SK-N-SH (cell line): ENCODE measurements at regions of chr10 and their contacts with region 1.

Region 1: DNA sequence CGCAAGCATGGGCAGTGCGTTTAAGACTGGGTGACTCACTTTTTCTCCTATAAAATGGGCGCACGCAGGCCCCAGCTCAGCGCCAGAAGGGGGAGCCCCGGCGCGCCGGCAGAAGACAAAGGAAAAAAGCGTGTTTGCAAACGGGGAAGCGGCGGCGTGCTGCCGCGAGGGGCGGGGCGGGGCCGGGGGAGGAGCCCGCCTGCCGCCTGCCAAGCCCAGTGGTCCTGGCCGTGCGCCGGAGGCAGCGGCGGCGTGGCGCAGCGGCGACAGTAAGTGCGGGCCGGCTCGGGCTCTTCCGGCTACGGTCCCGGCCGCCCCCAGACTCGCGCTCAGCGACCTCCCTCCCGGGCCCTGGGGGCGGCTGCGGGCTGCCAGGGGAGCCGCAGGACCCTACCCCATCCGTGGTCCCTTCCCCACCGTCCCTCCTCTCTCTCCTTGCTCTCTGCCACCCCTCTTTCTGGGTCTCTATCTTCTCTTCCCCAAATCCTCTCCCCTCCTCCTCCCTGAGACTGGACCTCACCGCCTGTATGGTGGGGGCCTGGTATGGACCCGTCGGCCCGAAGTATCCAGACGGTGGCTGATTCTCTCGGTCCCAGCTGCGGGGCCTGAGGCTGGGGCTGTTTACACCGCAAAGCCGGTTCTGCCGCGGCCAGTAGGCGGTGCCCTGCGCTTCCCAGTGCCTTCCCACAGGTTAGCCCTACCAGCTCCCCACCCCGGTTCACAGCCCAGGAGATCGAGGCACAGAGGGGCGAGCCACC is at the start of gene SLC29A3:
- DNase-seq: peak; percentile 93
- H3K4me3 ChIP-seq: peak within 1 kb of the TSS; percentile 86 to 94
- H3K27ac ChIP-seq: peak within 1 kb of the TSS; percentile 34 to 87; a peak in 3 of 4 replicates
- H3K4me1 ChIP-seq: peaks cover 0 to 18% of the 10 kb centered on the region in 2 experiments; a peak in 1 of 4 replicates
- H3K27me3 ChIP-seq: no peaks in the 10 kb centered on the region
- CTCF ChIP-seq: peak; percentile 67
- EP300 ChIP-seq: no peak
- RAD21 ChIP-seq: peak; percentile 66
- polyA plus RNA-seq, gene SLC29A3: 3.8 and 4.6 TPM in 2 replicates

Region 2: GRCh38 chr10:71307469-71308085 is 11.6 kb before region 1 on chr10:
- CTCF ChIA-PET with region 1: interaction called, 28 read pairs
- POLR2A ChIA-PET with region 1: interaction called, 3 read pairs
- DNase-seq: no peak
- H3K4me3 ChIP-seq: no peak overlapping the region
- H3K27ac ChIP-seq: no peak overlapping the region
- H3K4me1 ChIP-seq: no peaks in the 10 kb centered on the region
- H3K27me3 ChIP-seq: no peaks in the 10 kb centered on the region
- CTCF ChIP-seq: no peak
- EP300 ChIP-seq: no peak
- RAD21 ChIP-seq: no peak

Region 3: DNA sequence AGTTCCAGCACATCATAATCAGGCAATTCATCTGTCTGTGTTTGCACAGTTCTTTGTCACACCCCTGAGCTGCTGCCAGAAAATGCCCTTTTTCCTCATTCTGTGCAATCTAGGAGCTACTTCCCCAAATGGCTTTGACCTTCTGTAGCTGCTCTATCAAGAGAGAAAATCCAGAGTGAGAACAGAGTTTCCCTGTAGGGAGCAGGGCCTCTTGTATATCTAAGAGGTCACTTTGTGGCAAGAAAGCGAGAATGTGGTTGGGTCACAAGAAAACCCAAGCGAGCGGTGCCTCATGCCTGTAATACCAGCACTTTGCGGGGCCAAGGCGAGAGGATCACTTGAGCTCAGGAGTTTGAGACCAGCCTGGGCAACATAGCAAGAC is 24.2 kb after region 1 on chr10:
- CTCF ChIA-PET with region 1: interaction called, 99 read pairs
- POLR2A ChIA-PET with region 1: no interaction called
- DNase-seq: no peak
- H3K4me3 ChIP-seq: no peak overlapping the region
- H3K27ac ChIP-seq: no peak overlapping the region
- H3K4me1 ChIP-seq: peaks cover 0 to 25% of the 10 kb centered on the region in 2 experiments; a peak in 1 of 4 replicates
- H3K27me3 ChIP-seq: no peaks in the 10 kb centered on the region
- CTCF ChIP-seq: no peak
- EP300 ChIP-seq: no peak
- RAD21 ChIP-seq: no peak

Region 4: DNA sequence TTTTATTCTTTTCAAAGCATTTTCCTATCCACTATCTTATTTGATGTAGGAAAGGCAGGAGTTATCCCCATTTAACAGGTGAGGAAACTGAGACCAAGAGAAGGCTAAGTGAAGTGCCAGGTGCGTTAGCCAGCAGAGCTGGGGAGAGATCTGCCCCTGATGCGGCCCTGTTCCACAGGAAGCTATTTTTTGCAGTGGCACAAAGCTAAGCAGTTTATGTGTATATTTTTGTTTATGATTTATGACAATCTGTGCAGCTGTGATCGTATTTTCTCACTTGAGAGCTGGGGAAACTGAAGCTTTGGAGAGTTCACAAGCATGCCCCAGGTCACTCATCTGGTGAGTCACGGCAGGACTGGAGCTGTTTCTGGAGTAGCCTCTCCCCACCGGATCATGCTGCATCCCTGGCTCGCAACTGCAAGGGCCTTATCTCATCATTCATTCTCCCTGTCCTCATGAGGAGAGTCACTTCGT is 38.6 kb after region 1 on chr10:
- CTCF ChIA-PET with region 1: interaction called, 13 read pairs
- POLR2A ChIA-PET with region 1: interaction called, 4 read pairs
- DNase-seq: peak; percentile 82
- H3K4me3 ChIP-seq: no peak overlapping the region
- H3K27ac ChIP-seq: peak overlapping the region in 1 of 2 experiments; percentile 59; a peak in 2 of 4 replicates
- H3K4me1 ChIP-seq: peaks cover 0 to 10% of the 10 kb centered on the region in 2 experiments; a peak in 1 of 4 replicates
- H3K27me3 ChIP-seq: no peaks in the 10 kb centered on the region
- CTCF ChIP-seq: no peak
- EP300 ChIP-seq: no peak
- RAD21 ChIP-seq: no peak

Region 5: DNA sequence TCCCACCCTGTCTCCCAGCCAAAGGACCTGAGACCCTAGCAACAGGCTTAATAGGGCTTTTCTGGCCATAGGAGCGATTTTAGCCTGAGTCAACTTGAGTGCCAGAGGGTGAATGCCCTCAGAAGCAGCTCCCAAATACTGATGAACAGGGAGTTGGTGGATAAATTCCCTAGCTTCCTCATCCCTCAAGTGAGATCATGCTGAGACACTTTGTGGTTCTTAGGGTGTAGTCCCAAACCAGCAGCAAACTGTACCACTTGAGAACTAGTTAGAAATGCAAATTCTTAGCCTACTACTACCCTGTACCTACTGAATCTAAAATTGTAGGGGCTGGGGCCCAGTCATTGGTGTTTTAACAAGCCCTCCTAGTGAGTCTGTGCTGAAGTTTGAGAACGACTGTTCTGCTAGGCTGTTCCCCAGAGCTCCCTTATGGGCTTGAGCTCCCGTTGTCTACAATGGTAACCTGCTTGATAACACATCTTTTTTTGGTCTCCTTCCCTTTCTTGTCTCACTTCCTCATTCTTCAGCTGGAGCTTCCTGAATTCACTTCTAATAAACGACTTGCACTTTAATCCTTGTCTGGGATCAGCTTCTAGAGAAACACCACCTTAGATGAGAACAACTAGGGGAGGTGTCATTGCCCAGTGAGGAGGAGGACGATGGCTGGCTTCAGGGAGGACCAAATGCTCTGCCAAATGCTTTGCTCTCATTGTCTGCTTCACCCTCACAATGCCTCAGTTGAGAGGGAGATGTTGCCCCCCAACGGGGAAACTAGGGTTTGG is 59.3 kb after region 1 on chr10:
- CTCF ChIA-PET with region 1: interaction called, 36 read pairs
- POLR2A ChIA-PET with region 1: interaction called, 14 read pairs
- DNase-seq: no peak
- H3K4me3 ChIP-seq: no peak overlapping the region
- H3K27ac ChIP-seq: no peak overlapping the region
- H3K4me1 ChIP-seq: peaks cover 0 to 3% of the 10 kb centered on the region in 2 experiments; a peak in 1 of 4 replicates
- H3K27me3 ChIP-seq: no peaks in the 10 kb centered on the region
- CTCF ChIP-seq: no peak
- EP300 ChIP-seq: no peak
- RAD21 ChIP-seq: no peak

Region 6: DNA sequence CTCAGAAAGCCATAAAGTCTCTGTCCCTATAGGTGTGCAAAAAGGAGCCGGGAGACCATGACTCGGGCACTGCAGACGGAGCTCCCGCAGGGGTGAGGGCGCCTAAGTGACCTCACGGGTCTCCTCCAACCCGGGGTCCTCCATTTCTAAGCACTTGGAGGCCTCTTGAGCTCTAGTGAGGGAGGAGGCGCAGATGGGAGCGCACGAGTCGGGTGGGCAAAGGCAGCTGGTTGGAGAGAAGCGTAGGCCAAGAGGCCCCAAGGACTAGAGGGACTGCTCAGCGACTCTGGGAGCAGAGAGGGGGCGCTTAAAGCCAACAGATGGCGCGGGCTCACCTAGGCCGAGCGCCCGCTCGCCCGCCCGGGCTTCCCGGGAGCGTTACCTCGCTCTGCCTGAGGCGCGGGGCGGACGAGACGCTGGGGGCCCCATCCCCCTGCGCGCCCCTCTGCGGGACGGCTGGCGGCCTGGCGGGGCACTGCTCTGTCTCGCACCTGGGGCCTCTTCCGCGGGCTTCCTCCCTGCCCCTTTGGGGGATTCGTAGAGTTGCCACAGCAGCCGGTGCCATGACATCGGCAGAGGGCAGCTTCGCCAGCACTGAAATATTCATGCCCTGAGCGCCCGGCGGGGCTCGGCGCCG is 77.0 kb after region 1 on chr10:
- CTCF ChIA-PET with region 1: interaction called, 37 read pairs
- POLR2A ChIA-PET with region 1: interaction called, 3 read pairs
- DNase-seq: peak; percentile 90
- H3K4me3 ChIP-seq: peak overlapping the region in 1 of 2 experiments; percentile 41; a peak in 2 of 4 replicates
- H3K27ac ChIP-seq: no peak overlapping the region
- H3K4me1 ChIP-seq: peaks cover 0 to 9% of the 10 kb centered on the region in 2 experiments; a peak in 1 of 4 replicates
- H3K27me3 ChIP-seq: peaks cover 48% of the 10 kb centered on the region
- CTCF ChIP-seq: no peak
- EP300 ChIP-seq: no peak
- RAD21 ChIP-seq: peak; percentile 83

Region 7: DNA sequence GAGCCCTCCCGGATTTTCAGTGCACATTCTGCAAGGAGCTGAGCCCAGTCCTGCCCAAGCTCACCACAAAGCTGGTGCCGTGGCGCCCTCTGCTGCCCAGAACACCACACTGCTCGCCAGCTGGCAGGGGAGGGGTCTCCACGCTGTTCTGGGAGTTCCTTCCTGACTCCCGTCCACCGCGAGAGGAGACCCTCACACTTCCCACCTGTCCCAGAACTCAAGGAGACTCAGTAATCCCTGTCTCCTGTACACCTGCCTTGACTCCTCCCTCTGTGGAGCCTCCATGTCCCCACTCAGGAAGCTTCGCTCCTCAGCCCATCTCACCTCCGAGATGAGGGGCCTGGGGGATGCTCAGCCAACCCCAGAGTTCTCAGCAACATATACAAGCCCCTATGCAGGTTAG is 389.1 kb after region 1 on chr10:
- CTCF ChIA-PET with region 1: interaction called, 27 read pairs
- POLR2A ChIA-PET with region 1: interaction called, 6 read pairs
- DNase-seq: peak; percentile 90
- H3K4me3 ChIP-seq: peak overlapping the region in 1 of 2 experiments; percentile 51; a peak in 1 of 4 replicates
- H3K27ac ChIP-seq: no peak overlapping the region
- H3K4me1 ChIP-seq: peaks cover 0 to 13% of the 10 kb centered on the region in 2 experiments; a peak in 1 of 4 replicates
- H3K27me3 ChIP-seq: peaks cover 3% of the 10 kb centered on the region; the same call in 1 of the 2 replicates
- CTCF ChIP-seq: peak; percentile 77
- EP300 ChIP-seq: no peak
- RAD21 ChIP-seq: peak; percentile 90